ENCODE measurements at regions of chr17 and their contacts with region 1.

Region 1: DNA sequence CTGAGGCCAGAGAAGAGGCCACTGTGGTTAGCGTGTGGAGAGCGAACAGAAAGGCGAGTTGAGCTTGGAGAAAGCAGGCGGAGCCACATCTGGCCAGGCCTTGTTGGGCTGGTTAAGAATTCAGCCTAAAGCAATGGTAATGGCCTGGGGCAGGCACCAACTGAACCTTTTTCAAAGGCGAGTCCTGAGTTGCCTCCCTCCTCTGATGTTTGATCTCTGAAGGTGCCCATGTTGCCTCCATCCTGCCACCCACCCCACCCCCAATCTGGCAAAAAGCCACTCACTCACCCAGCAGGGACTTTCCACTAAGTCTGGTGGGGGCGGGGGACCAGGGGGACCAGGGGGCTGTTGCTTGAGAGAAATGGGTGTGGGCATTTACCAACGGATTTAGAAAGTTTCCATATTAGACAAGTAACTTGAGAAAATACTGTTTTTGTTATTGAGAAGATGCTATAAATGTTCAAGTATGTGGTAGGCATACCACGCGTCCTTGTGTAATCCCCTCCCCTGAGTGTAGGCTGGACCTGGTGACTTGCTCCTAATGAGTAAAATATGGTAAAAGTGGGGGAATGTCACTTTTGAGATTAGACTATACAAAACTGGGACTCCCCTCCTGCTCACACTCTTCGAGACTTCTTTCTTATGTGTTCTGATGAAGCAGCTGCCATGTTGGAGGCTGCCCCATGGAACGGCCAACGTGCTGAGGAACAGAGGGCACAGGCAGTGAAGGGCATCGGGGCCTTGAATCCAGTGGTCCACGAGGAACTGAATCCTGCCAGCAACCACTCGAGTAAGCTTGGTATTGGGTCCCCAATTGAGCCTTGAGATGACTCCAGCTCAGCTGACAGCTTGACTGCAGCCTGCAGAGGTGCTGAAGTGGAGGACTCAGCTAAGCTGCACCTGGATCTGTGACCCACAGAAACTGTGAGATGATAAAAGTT is 29.9 kb upstream of the TNS4 start:
- DNase-seq: no peak
- ATAC-seq: no peak
- H3K4me3 Mint-ChIP-seq: no peak overlapping the region
- H3K27ac Mint-ChIP-seq: peak overlapping the region; percentile 92
- H3K4me1 Mint-ChIP-seq: peaks cover 91% of the 10 kb centered on the region
- H3K27me3 Mint-ChIP-seq: no peaks in the 10 kb centered on the region

Region 2: DNA sequence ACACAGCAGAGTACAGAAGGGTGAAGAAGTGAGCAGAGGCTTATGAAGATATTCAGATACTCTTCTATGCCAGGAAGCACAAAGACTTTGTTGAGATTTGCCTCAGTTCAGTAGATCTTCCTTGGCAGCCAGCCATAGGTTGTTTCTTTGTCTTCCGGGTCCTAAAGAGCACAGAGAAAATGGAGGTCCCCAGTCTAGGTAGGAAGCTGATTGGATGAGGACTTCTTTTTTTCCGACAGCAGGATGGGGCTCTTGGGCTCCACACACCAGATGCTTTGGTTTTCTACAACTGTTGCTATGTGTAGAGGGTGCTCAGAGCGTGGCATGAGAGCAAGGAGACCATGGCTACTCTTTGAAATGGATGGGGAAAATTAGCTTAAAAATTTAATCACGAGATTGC is 251.9 kb before region 1 on chr17:
- CTCF ChIA-PET with region 1: no interaction called
- POLR2A ChIA-PET with region 1: no interaction called
- DNase-seq: no peak
- ATAC-seq: no peak
- H3K4me3 Mint-ChIP-seq: no peak overlapping the region
- H3K27ac Mint-ChIP-seq: no peak overlapping the region
- H3K4me1 Mint-ChIP-seq: peaks cover 38% of the 10 kb centered on the region
- H3K27me3 Mint-ChIP-seq: no peaks in the 10 kb centered on the region

Region 3: DNA sequence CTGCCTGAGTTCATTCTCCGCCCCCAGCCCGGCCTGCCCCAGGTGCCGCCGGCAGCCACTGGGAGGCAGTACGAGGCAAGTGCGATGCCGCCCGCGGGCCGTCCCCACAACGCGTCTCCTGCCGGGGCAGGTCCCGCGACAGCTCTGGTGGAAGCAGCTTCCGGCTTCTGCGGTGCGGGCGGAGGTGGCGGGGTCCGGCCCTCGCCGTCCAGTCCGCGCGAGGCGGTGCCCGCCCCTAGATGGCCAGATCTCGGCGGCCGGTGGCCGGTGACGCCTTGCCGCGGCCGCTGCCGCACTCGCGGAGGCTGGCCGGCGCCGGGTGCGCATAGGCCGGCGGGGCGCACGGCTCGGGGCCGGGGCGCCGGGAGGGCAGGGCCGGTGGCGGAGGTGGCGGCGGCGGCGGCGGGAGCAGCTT is 168.6 kb before region 1 on chr17:
- CTCF ChIA-PET with region 1: interaction called, 187 read pairs
- POLR2A ChIA-PET with region 1: interaction called, 12 read pairs
- DNase-seq: peak; percentile 93
- ATAC-seq: peak; percentile 93
- H3K4me3 Mint-ChIP-seq: peak overlapping the region; percentile 72
- H3K27ac Mint-ChIP-seq: no peak overlapping the region
- H3K4me1 Mint-ChIP-seq: peaks cover 41% of the 10 kb centered on the region
- H3K27me3 Mint-ChIP-seq: peaks cover 13% of the 10 kb centered on the region

Region 4: DNA sequence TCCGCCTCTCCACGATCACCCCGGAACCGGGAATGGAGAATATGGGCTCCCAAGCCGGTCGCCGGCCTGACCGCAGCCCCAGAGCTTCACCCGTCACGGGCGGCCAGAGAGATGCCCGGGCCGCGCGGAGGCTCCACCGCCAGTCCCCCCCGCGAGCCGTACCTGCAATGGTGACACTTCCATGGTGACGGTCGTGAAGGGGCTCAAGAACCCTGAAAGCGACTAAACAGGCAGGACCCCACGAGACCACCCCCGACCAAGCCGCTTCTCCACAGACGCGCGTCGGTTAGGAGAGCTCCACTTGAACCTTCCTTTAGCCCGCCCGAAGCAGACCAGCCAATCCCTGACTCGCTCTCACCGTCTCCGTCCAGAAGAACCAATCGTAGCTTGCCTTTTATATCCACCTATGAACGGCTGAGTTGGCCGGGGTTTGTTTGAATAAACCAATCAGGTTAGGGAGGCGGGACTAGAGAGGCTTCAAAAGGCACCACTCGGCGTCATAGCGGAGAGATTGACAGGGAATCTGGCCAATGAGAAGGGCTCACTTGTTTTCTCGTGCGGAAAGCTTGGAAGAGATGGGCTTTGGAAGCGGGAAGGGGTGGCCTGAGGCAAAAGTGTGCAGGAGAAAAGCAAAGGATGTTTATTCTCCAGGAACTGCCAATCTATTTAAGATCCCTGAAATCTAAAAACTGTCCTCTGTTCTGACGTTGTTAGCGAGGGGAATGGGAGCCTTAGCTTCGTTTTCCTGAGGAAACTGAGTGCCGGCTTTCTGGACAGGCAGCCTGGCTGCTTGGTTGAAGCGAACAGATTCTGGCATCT is 113.5 kb before region 1 on chr17 and contains the start of gene TOP2A:
- CTCF ChIA-PET with region 1: interaction called, 122 read pairs
- POLR2A ChIA-PET with region 1: interaction called, 67 read pairs
- DNase-seq: peak; percentile 98
- ATAC-seq: peak; percentile 97
- H3K4me3 Mint-ChIP-seq: peak within 1 kb of the TSS; percentile 98
- H3K27ac Mint-ChIP-seq: peak within 1 kb of the TSS; percentile 98
- H3K4me1 Mint-ChIP-seq: peaks cover 50% of the 10 kb centered on the region
- H3K27me3 Mint-ChIP-seq: no peaks in the 10 kb centered on the region
- total RNA-seq, gene TOP2A: 517 to 567 TPM

Region 5: GRCh38 chr17:40450175-40450574 is 81.1 kb before region 1 on chr17:
- CTCF ChIA-PET with region 1: interaction called, 78 read pairs
- POLR2A ChIA-PET with region 1: interaction called, 7 read pairs
- DNase-seq: peak; percentile 58
- ATAC-seq: no peak
- H3K4me3 Mint-ChIP-seq: no peak overlapping the region
- H3K27ac Mint-ChIP-seq: no peak overlapping the region
- H3K4me1 Mint-ChIP-seq: peaks cover 40% of the 10 kb centered on the region
- H3K27me3 Mint-ChIP-seq: no peaks in the 10 kb centered on the region

Region 6: GRCh38 chr17:40490289-40490853 is 41.0 kb before region 1 on chr17:
- CTCF ChIA-PET with region 1: interaction called, 13 read pairs
- POLR2A ChIA-PET with region 1: interaction called, 8 read pairs
- DNase-seq: peak; percentile 34
- ATAC-seq: no peak
- H3K4me3 Mint-ChIP-seq: peak overlapping the region; percentile 22
- H3K27ac Mint-ChIP-seq: peak overlapping the region; percentile 78
- H3K4me1 Mint-ChIP-seq: peaks cover 57% of the 10 kb centered on the region
- H3K27me3 Mint-ChIP-seq: no peaks in the 10 kb centered on the region

Region 7: GRCh38 chr17:40542558-40543411 is 11.5 kb after region 1 on chr17:
- CTCF ChIA-PET with region 1: interaction called, 618 read pairs
- POLR2A ChIA-PET with region 1: interaction called, 22 read pairs
- DNase-seq: peak; percentile 51
- ATAC-seq: peak; percentile 6
- H3K4me3 Mint-ChIP-seq: peak overlapping the region; percentile 44
- H3K27ac Mint-ChIP-seq: peak overlapping the region; percentile 93
- H3K4me1 Mint-ChIP-seq: peaks cover 91% of the 10 kb centered on the region
- H3K27me3 Mint-ChIP-seq: no peaks in the 10 kb centered on the region